Activated CD8-positive, alpha-beta T cell treated with anti-CD3 and anti-CD28 coated beads for 36 hours (primary cell): ENCODE measurements at regions of chr19 and their contacts with region 1.

Region 1: DNA sequence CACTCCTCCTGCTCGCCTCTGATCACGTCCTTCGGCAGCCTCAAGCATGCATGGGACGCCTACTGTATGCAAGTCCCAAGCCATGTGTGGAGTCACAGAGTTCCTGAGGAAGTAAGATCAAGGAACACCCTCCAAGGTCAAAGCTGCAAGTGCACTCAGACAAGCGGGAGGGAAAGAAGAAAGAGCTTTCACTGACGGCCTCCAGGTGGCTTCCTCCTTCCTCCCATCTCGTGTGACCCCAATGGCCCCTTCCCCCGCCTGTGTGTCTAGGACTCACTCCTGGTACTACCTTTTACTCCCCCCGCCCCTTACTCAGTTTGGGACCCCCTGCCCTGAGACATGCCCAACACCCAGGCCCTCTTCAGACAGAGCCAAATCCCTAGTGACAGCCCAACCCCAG is 6.0 kb downstream of the HAUS8 start:
- DNase-seq: no peak
- ATAC-seq: no peak
- H3K4me3 Mint-ChIP-seq: no peak overlapping the region
- H3K27ac Mint-ChIP-seq: no peak overlapping the region
- H3K4me1 Mint-ChIP-seq: peaks cover 41% of the 10 kb centered on the region
- H3K27me3 Mint-ChIP-seq: no peaks in the 10 kb centered on the region
- CTCF ChIP-seq: no peak

Region 2: DNA sequence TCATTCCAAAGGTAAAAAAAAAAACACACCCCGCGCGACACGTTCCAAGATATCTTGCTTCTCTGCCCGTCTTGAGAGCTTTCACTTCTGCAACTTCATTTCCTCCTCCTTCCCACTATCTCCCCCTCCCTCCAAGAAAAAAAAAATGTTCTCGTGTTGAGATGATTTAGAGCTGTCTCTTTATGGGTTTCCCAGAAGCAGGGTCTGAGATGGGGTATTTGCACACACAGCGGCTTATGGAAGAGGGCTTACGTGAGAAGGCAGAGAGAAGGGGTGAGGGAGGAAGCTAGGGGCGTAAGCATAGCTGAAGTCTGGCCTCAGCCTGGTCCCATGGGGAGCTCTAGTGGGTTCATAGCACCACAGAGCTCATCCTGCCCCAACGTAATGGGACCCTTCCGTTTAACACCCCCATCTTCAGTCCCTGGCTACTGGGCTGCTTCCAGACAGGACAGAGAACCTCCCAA is 114.7 kb after region 1 on chr19:
- CTCF ChIA-PET with region 1: interaction called, 13 read pairs
- POLR2A ChIA-PET with region 1: interaction called, 5 read pairs
- intact Hi-C with region 1: no loop called
- DNase-seq: peak; percentile 42
- ATAC-seq: peak; percentile 67
- H3K4me3 Mint-ChIP-seq: peak overlapping the region; percentile 72
- H3K27ac Mint-ChIP-seq: peak overlapping the region; percentile 97
- H3K4me1 Mint-ChIP-seq: peaks cover 20% of the 10 kb centered on the region
- H3K27me3 Mint-ChIP-seq: no peaks in the 10 kb centered on the region
- CTCF ChIP-seq: no peak